ENCODE measurements at regions of chr1 and their contacts with region 1.

Region 1: GRCh38 chr1:31663622-31664452 is 19.2 kb upstream of the PEF1 start:
- DNase-seq: peak; percentile 71
- H3K4me3 ChIP-seq: no peak overlapping the region
- H3K27ac ChIP-seq: no peak overlapping the region
- H3K4me1 ChIP-seq: peaks cover 0 to 24% (median 18%) of the 10 kb centered on the region in 4 donors
- H3K27me3 ChIP-seq: no peaks in the 10 kb centered on the region
- CTCF ChIP-seq: peak; percentile 91 to 97 (median 95)
- EP300 ChIP-seq: no peak
- POLR2A ChIP-seq: no peak

Region 2: DNA sequence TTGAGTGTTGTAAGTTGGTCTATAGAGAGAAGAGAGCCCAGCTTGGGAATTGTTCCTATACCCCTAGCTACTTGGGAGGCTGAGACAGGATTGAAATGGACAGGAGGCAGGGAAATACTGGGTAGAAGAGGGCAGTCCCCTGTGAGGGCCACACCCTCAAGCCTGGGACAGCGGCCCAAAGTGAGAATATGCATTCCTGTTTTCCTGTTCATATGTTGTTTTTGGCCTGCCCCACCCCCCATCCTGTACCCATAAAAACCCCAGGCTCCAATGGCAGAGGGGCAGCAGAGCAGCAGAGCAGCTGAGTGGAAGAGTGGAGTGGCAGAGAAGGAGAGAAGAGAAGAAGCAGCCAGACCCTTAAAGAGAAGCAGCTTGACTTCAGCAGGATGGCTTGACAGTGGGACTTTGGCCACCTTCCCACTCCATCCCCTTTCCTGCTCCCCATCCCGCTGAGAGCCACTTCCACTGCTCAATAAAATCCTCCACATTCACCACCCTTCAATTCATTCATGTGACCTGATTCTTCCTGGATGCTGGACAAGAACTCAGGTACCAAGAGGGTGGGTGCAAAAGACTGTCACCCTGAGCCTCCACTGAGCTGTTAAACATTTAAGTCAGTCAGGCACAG is 527.8 kb before region 1 on chr1:
- in situ Hi-C with region 1: no loop called
- intact Hi-C with region 1: no loop called
- DNase-seq: no peak
- H3K4me3 ChIP-seq: no peak overlapping the region
- H3K27ac ChIP-seq: no peak overlapping the region
- H3K4me1 ChIP-seq: no peaks in the 10 kb centered on the region
- H3K27me3 ChIP-seq: no peaks in the 10 kb centered on the region
- CTCF ChIP-seq: no peak
- EP300 ChIP-seq: no peak
- POLR2A ChIP-seq: no peak

Region 3: DNA sequence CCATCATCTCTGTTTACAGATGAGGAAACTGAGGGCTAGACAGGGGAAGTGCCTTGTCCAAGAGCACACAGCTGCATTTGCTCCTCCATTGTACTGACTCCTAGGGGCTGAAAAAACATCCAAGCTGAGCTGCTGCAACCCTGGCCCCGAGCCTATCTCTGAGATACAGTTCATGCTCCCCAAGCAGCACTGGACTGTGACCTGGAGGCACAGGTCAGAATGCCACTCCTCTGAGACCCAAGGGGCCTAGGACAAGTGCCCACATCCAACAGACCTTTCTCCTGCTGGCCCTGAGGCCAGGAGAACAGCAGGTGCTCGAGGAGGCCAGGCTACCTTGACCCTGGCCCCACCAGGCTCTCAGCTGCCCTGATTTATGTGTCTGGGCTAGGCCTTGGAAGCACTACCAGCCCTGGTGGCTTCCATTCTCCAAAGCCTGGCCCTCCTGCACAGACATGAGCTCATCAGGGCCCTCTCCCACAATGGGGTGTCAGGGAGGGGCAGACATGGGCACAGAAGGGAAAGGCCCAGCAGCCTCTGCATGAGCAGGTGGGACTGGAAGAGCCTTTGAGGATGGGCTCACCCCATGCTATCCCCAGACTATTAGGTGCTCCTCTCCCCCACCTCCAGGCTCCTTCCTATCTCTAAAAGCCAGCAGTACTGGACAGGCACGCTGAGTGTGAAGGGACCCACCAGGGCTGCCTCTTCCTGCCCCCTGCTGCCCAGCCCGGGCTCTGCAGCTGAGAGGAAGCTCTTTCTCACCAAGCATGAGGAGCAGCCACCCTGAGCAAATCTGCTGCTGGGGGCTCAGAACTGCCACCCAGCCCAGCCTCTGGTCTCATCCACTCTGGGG is 81.5 kb after region 1 on chr1:
- in situ Hi-C with region 1: no loop called
- intact Hi-C with region 1: loop called (anchors 10 kb)
- DNase-seq: peak; percentile 78
- H3K4me3 ChIP-seq: no peak overlapping the region
- H3K27ac ChIP-seq: peak overlapping the region in 1 of 4 donors; percentile 21
- H3K4me1 ChIP-seq: no peaks in the 10 kb centered on the region
- H3K27me3 ChIP-seq: peaks cover 4% of the 10 kb centered on the region
- CTCF ChIP-seq: peak; percentile 58 to 71 (median 67)
- EP300 ChIP-seq: no peak
- POLR2A ChIP-seq: no peak

Region 4: DNA sequence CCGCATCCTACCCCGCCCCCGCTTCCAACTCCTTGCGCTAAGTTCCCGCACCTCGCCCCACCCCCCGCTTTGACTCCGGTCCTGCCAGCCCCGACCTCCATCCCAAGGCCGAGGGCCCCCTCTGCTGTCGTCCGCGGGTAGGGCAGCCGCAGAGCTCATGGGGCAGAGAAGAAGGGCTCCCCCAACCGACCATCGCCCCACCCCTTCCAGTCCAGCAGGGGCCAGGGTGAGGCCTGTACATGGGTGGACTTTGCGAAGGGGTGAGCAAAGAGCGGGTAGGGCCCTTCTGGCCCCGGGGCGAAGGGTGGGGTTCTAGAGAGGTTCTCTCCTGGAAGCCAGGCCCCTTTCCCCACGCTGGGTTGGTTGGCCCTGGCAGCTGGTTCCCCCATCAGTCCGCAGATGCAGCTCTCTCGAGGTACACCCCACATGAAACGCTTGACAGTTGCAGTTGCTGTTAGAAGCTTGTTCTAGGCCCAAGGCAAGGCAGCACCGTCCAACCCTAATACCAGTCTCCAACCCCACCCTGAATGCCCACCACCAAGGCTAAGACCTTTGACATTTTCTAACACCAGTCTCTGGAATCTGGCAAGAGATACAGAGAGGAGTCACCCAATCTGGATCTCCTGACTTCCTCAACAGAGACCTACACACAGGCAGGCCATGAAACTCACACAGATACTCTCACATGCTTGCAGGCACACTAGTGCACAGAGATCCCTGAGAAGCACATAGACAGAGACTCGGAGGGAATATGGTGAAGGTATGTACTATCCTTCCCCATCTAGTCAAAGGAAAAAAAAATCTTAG is 125.6 kb after region 1 on chr1:
- in situ Hi-C with region 1: loop called (anchors 5 to 25 kb)
- intact Hi-C with region 1: loop called (anchors 2 kb)
- DNase-seq: peak; percentile 98
- H3K4me3 ChIP-seq: peak overlapping the region; percentile 41 to 66 (median 53)
- H3K27ac ChIP-seq: peak overlapping the region; percentile 81 to 90 (median 88)
- H3K4me1 ChIP-seq: peaks cover 0 to 15% (median 6%) of the 10 kb centered on the region in 4 donors
- H3K27me3 ChIP-seq: no peaks in the 10 kb centered on the region
- CTCF ChIP-seq: peak; percentile 89 to 96 (median 92)
- EP300 ChIP-seq: no peak
- POLR2A ChIP-seq: no peak